Left cardiac atrium (tissue), 4 donors: ENCODE measurements at regions of chr22 and their contacts with region 1.

Region 1: DNA sequence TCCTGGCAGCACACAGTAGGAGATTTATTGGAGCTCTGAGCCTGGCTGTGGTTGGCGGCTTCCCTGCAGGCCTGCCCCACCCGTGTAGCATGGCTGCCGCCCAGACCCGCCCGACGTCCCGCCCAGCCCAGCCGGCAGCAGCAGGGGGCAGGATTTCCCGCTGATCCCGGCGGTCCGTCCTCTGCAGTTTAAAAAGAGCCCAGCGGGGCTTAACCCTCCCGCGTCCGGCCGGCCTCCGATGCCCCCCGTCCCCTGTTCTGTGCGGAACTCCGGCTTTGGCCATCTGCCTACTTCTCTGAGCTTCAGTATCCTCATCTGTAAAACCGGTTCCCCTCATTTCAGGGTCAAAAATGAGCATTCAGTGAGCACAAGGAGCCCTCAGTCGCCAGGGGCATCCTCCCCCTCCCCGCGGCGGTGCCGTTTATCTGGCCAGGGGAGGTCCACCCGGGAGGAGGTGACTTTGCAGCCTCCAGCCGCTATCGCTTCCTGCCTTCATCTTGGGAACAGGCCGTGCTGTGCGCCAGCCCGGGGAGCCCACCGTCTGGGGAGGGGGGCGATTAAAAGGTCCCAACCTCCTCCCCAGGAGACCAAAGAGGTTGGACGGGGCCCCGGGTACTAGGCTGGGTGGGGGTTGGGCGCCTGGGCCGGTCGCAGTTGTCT is at the start of gene GAS2L1:
- DNase-seq: peak; percentile 91
- ATAC-seq: peak; percentile 72 to 77
- total RNA-seq, gene GAS2L1: 20.1 to 25.2 TPM

Region 2: GRCh38 chr22:29269731-29270470 is 36.4 kb before region 1 on chr22:
- intact Hi-C with region 1: loop called in 1 of 2 experiments (anchors 5 kb)
- DNase-seq: no peak
- ATAC-seq: no peak

Region 3: GRCh38 chr22:29359469-29359868 is 53.2 kb after region 1 on chr22:
- intact Hi-C with region 1: loop called in 1 of 2 experiments (anchors 5 kb)
- DNase-seq: peak; percentile 73
- ATAC-seq: peak; percentile 84 to 89